Endothelial cell of umbilical vein (primary cell): ENCODE measurements at regions of chr13 and their contacts with region 1.

Region 1: GRCh38 chr13:102707465-102707864 is 12.6 kb upstream of the METTL21C start:
- DNase-seq: peak; percentile 93
- H3K4me3 ChIP-seq: no peak overlapping the region
- H3K27ac ChIP-seq: peak overlapping the region; percentile 59
- H3K4me1 ChIP-seq: peaks cover 48% of the 10 kb centered on the region
- H3K27me3 ChIP-seq: no peaks in the 10 kb centered on the region
- CTCF ChIP-seq: no peak
- POLR2A ChIP-seq: no peak

Region 2: DNA sequence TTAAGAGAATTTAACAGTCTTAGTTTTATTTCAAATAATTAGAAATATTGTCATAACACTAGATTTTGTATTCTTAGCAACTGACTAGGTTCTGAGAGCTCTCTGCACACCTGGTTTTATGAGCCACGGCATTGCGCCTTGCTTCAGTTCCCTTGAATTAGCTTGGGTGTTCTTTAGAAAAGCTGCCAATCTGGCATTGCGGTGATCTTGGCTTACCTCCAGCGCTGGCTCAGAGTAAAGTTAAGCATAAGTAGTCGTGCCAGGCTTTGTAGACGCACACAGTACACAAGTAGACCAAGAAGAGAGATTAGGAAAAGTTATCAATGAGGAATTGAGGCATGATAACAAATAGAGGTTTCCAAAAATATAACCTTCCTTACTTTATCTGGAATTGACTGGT is 65.0 kb before region 1 on chr13:
- CTCF ChIA-PET with region 1: no interaction called
- POLR2A ChIA-PET with region 1: no interaction called
- dilution Hi-C with region 1: no loop called
- intact Hi-C with region 1: loop called (anchors 2 kb)
- DNase-seq: no peak
- H3K4me3 ChIP-seq: no peak overlapping the region
- H3K27ac ChIP-seq: no peak overlapping the region
- H3K4me1 ChIP-seq: peaks cover 16% of the 10 kb centered on the region
- H3K27me3 ChIP-seq: no peaks in the 10 kb centered on the region
- CTCF ChIP-seq: no peak
- POLR2A ChIP-seq: no peak

Region 3: DNA sequence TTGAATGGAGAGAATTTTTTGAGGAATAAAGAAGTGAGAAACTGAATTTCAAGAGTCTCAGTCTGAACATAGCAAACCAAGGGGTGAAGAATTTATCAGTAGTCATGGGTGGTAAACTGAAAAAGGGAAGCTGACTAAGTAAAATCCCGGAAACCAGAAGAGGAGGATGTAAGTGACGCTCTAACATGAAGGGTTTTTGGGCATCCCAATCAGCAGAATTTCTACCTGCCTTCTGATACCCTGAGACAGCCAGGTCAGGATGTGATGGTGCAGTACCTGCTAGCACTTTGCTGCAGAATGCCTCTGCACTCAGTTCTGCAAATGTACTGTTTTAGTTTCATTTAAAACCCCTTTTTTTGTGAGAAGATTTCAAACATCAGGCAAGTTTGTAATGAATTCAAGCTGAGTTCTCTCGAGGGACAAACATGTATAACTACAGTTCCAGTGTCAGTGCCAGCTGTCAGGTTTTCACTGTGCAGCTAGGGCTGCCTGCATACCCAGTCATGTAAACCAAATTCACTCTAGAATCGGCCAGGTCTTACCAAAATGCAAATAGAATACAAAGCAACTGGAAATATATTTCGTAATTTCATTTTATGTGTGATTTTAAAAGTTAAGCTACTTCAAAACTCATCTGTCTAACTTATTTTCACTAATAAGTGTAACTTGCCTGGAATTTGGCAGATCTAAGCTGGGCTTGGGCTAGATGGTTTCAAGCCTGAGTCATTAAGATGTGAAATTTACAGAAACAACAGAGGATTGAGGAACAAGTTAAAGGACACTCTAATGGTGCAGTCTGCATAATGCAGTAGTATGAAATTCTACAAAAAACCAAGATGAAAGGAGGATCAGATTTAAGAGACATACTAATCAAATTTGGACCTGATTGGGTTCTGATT is 26.4 kb before region 1 on chr13:
- CTCF ChIA-PET with region 1: no interaction called
- POLR2A ChIA-PET with region 1: no interaction called
- dilution Hi-C with region 1: no loop called
- intact Hi-C with region 1: loop called (anchors 2 kb)
- DNase-seq: no peak
- H3K4me3 ChIP-seq: no peak overlapping the region
- H3K27ac ChIP-seq: no peak overlapping the region
- H3K4me1 ChIP-seq: no peaks in the 10 kb centered on the region
- H3K27me3 ChIP-seq: no peaks in the 10 kb centered on the region
- CTCF ChIP-seq: no peak
- POLR2A ChIP-seq: no peak